ENCODE measurements at regions of chr7 and their contacts with region 1.

Region 1: DNA sequence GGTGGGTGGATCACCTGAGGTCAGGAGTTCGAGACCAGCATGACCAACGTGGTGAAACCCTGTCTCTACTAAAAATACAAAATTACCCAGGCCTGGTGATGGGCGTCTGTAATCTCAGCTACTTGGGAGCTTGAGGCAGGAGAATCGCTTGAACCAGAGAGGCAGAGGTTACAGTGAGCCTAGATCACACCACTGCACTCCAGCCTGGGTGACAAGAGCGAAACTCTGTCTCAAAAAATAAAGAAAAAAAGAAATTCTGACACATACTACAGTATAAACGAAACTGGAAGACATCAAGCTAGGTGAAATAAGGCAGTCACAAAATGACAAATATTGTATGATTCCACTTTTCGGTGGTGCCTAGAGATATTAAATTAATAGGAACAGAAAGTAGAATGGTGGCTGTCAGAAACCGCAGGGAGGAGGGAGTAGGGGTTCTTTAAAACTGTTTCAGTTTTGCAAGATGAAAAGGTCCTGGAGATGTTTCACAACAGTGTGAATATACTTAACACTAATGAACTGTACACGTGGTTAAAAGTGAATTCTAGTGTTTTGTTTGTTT is 23.2 kb downstream of the PILRA start:
- DNase-seq: no peak
- H3K4me3 Mint-ChIP-seq: no peak overlapping the region
- H3K27ac Mint-ChIP-seq: no peak overlapping the region
- H3K4me1 Mint-ChIP-seq: no peaks in the 10 kb centered on the region
- H3K27me3 Mint-ChIP-seq: peaks cover 39% of the 10 kb centered on the region
- CTCF ChIP-seq: no peak

Region 2: GRCh38 chr7:100407285-100408180 is 11.0 kb after region 1 on chr7:
- CTCF ChIA-PET with region 1: interaction called, 15 read pairs
- POLR2A ChIA-PET with region 1: interaction called, 5 read pairs
- intact Hi-C with region 1: no loop called
- DNase-seq: peak; percentile 82
- H3K4me3 Mint-ChIP-seq: no peak overlapping the region
- H3K27ac Mint-ChIP-seq: no peak overlapping the region
- H3K4me1 Mint-ChIP-seq: no peaks in the 10 kb centered on the region
- H3K27me3 Mint-ChIP-seq: peaks cover 9% of the 10 kb centered on the region
- CTCF ChIP-seq: peak; percentile 62